HCT116 (cell line): ENCODE measurements at regions of chrX and their contacts with region 1.

Region 1: DNA sequence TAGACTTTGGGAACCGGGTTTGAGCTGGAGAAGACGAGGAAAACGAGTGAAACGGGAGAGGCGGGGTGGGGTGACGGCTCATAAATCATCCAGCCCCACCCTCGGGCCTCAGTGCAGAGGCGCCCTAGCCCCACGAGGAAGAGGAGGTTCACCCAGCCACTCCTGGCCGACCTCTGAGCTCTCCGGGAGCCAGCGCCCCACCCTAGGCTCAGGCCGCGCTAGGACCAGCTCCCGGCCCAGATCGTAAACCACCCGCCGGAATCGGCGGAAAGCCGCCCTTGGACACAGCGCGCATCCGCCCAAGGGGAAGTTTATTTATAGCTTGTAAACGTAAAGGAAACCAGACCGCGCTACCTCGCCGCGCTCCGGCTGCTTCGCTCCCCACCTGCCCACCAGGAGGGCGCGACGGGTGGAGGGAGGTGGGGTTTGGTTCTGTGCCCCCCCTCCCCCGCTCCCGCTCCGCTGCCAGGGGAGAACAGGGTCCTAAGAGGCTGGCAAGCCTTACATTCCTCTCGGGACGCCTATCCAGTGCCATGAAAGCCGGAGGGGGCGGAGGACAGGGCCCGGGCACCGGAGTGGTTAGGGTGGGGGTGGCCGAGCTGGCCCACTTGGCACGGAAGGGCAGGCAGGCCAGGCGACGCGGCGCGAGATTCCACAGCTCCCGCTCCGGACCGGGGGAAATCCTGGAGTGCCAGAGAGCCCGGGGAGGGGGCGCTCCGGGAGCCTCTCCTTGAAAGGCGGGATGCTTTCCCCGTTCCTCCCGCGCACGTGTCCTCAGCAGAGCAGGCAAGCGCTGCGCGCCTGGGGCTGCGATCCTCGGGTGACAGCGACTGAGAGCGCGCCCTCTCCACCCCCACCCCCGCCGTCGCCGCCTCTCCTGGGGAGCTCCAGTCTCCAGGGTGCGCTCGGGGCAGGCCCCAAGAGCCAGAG is 84.2 kb downstream of the BCOR start:
- DNase-seq: no peak
- ATAC-seq: peak; percentile 63
- H3K4me3 ChIP-seq: peak overlapping the region; percentile 47 to 59
- H3K27ac ChIP-seq: peak overlapping the region; percentile 82
- H3K4me1 ChIP-seq: peaks cover 4 to 20% of the 10 kb centered on the region in 2 experiments; a peak in 2 of 4 replicates
- H3K27me3 ChIP-seq: no peaks in the 10 kb centered on the region
- CTCF ChIP-seq: no peak
- POLR2A ChIP-seq: no peak
- RAD21 ChIP-seq: no peak

Region 2: GRCh38 chrX:39705299-39705698 is 308.2 kb before region 1 on chrX:
- CTCF ChIA-PET with region 1: no interaction called
- POLR2A ChIA-PET with region 1: no interaction called
- RAD21 ChIA-PET with region 1: no interaction called
- intact Hi-C with region 1: loop called (anchors 10 kb)
- DNase-seq: peak; percentile 29
- ATAC-seq: peak; percentile 95
- H3K4me3 ChIP-seq: no peak overlapping the region
- H3K27ac ChIP-seq: no peak overlapping the region
- H3K4me1 ChIP-seq: peaks cover 0 to 7% of the 10 kb centered on the region in 2 experiments; a peak in 2 of 4 replicates
- H3K27me3 ChIP-seq: no peaks in the 10 kb centered on the region
- CTCF ChIP-seq: peak in 2 of 3 experiments; percentile 40 to 58; a peak in 4 of 6 replicates
- POLR2A ChIP-seq: no peak
- RAD21 ChIP-seq: no peak; the same call in 1 of the 2 replicates